ENCODE measurements at regions of chr2 and their contacts with region 1.

Region 1: GRCh38 chr2:149657401-149658040 is 69.9 kb upstream of the MMADHC start:
- DNase-seq: no peak
- H3K4me3 ChIP-seq: no peak overlapping the region
- H3K27ac ChIP-seq: no peak overlapping the region
- H3K4me1 ChIP-seq: no peaks in the 10 kb centered on the region
- H3K27me3 ChIP-seq: no peaks in the 10 kb centered on the region
- CTCF ChIP-seq: no peak
- EP300 ChIP-seq: no peak
- POLR2A ChIP-seq: no peak

Region 2: DNA sequence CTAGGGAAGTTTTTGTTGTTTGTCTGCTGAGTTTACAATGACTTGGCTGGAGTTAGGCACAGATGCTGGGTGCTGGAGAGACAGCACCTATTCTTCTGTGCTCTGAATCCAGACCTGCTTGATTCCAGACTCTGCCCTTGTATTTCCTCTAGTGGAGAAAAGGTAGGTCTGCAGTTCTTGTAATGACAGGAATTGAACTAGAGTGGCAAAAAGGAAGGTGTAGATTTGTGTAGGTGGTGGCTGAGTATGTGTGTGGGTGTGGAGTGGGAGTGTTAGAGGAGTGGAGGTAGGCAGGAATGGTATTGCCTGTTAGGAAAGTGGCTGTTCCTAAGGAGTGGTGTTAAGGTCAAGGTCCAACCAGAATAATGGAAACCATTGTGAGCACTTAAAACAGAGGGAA is 399.0 kb before region 1 on chr2:
- intact Hi-C with region 1: loop called in 1 of 4 experiments (anchors 5 kb)
- DNase-seq: no peak
- H3K4me3 ChIP-seq: no peak overlapping the region
- H3K27ac ChIP-seq: no peak overlapping the region
- H3K4me1 ChIP-seq: no peaks in the 10 kb centered on the region
- H3K27me3 ChIP-seq: no peaks in the 10 kb centered on the region
- CTCF ChIP-seq: no peak
- EP300 ChIP-seq: no peak
- POLR2A ChIP-seq: no peak

Measured in ovary (tissue), 10 donors.